ENCODE measurements at regions of chr1 and their contacts with region 1.

Region 1: GRCh38 chr1:230917284-230918135 is 49.2 kb upstream of the C1orf198 start:
- DNase-seq: peak; percentile 78 to 83
- ATAC-seq: peak; percentile 66
- H3K4me3 ChIP-seq: no peak overlapping the region
- H3K27ac ChIP-seq: no peak overlapping the region
- H3K4me1 ChIP-seq: no peaks in the 10 kb centered on the region
- H3K27me3 ChIP-seq: no peaks in the 10 kb centered on the region

Region 2: GRCh38 chr1:229759038-229759436 is 1158.5 kb before region 1 on chr1:
- intact Hi-C with region 1: no loop called
- DNase-seq: no peak
- ATAC-seq: no peak
- H3K4me3 ChIP-seq: no peak overlapping the region
- H3K27ac ChIP-seq: no peak overlapping the region
- H3K4me1 ChIP-seq: no peaks in the 10 kb centered on the region
- H3K27me3 ChIP-seq: no peaks in the 10 kb centered on the region

Region 3: GRCh38 chr1:230509281-230509977 is 408.1 kb before region 1 on chr1:
- intact Hi-C with region 1: no loop called
- DNase-seq: peak in 1 of 2 donors; percentile 65
- ATAC-seq: no peak
- H3K4me3 ChIP-seq: no peak overlapping the region
- H3K27ac ChIP-seq: no peak overlapping the region
- H3K4me1 ChIP-seq: no peaks in the 10 kb centered on the region
- H3K27me3 ChIP-seq: peaks cover 0 to 3% of the 10 kb centered on the region in 2 donors

Region 4: DNA sequence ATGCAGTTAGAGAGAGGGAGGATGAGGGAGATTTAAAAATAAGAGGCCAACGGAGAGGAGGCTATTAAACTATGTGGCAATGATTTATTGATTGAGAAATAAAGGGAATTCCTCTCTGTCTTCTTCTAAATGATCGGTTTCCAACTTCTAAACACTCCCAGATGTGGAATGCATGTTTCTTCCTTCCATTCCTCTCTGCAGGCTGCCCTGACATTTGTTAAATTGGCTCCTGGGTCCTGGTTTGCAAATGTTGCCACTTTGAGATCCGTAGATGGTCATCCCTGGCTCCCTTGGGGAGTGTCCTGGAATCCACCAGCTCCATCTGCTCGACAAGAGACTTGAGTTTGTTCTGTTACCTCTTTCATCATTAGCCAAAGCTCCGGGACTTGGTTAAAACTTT is 38.9 kb before region 1 on chr1:
- intact Hi-C with region 1: no loop called
- DNase-seq: no peak
- ATAC-seq: peak; percentile 4
- H3K4me3 ChIP-seq: no peak overlapping the region
- H3K27ac ChIP-seq: no peak overlapping the region
- H3K4me1 ChIP-seq: no peaks in the 10 kb centered on the region
- H3K27me3 ChIP-seq: no peaks in the 10 kb centered on the region

Region 5: DNA sequence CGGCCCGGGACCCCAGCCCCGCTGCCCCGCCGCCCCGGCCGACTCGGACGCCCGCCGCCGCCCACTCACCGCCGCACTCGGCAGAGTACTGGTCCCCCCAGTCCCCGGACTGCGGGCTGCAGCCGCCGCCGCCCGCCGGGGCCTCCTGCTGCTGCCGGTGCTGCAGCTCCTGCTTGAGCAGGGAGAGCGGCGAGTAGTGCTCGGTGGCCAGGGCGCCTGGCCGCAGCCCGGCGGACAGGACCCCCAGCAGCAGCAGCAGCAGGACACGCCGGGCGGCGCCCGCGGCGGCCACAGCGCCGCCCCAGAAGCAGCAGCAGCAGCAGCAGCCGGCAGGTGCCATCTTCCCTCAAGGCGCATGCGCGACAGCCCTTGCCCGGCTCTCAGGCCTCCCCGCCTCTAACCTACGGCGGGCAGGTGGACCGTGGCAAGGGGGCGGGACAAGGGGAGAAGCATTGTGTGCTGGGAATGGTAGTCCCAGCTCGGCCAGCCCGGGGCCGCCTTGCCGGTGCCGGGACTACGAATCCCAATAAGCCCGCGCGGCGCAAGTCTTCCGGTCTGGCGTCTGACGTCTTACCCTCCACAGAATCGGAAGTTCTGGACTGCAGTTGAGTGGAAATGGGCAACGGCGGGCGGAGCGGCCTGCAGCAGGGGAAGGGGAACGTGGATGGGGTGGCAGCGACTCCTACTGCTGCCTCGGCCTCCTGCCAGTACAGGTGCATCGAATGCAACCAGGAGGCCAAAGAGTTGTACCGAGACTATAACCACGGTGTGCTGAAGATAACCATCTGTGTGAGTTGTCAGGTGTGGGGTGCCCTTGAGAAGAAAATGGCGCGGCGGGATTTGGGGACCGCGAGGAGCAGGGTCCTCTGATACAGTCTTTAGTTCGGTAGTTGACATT is 61.2 kb after region 1 on chr1 and contains the starts of genes ARV1 and TTC13:
- intact Hi-C with region 1: loop called in 1 of 2 experiments (anchors 5 kb)
- DNase-seq: peak; percentile 99 to 100
- ATAC-seq: peak; percentile 100
- H3K4me3 ChIP-seq: peak within 1 kb of the TSS; percentile 76 to 89
- H3K27ac ChIP-seq: peak within 1 kb of the TSS in 1 of 2 donors; percentile 5
- H3K4me1 ChIP-seq: peaks cover 0 to 6% of the 10 kb centered on the region in 2 donors
- H3K27me3 ChIP-seq: no peaks in the 10 kb centered on the region
- total RNA-seq, gene ARV1: 10.7 to 12.2 TPM
- total RNA-seq, gene TTC13: 19.3 to 22.6 TPM

Region 6: GRCh38 chr1:231053493-231054162 is 136.1 kb after region 1 on chr1:
- intact Hi-C with region 1: no loop called
- DNase-seq: peak in 1 of 2 donors; percentile 56
- ATAC-seq: peak; percentile 54
- H3K4me3 ChIP-seq: no peak overlapping the region
- H3K27ac ChIP-seq: no peak overlapping the region
- H3K4me1 ChIP-seq: no peaks in the 10 kb centered on the region
- H3K27me3 ChIP-seq: peaks cover 0 to 2% of the 10 kb centered on the region in 2 donors

Measured in aorta (tissue), 5 donors.